Ascending aorta (tissue), 2 donors: ENCODE measurements at regions of chr6 and their contacts with region 1.

Region 1: GRCh38 chr6:53171605-53172446 is 23.2 kb upstream of the GCM1 start:
- DNase-seq: peak; percentile 52 to 93
- H3K4me3 ChIP-seq: no peak overlapping the region
- H3K27ac ChIP-seq: no peak overlapping the region
- H3K4me1 ChIP-seq: no peaks in the 10 kb centered on the region
- H3K27me3 ChIP-seq: no peaks in the 10 kb centered on the region
- CTCF ChIP-seq: peak; percentile 100

Region 2: DNA sequence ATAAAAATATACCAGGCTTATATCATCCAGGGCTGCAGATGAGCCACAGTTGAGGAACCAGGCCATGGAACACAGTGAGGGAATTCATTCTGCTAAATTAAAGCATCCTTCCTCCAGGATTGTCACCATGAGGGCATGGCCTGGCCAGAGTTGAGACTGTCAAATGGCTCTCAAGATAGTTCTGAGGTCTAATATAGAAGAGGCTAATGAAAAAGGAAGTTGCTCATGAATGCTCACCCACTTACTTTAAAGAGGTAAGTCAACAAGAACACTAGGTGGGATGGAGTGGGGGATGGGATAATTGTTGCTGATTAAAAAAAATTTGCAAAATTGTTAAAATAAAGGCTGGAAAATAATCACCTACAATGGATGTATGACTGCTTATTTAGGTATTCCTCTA is 48.8 kb after region 1 on chr6:
- intact Hi-C with region 1: no loop called
- DNase-seq: no peak
- H3K4me3 ChIP-seq: no peak overlapping the region
- H3K27ac ChIP-seq: no peak overlapping the region
- H3K4me1 ChIP-seq: no peaks in the 10 kb centered on the region
- H3K27me3 ChIP-seq: no peaks in the 10 kb centered on the region
- CTCF ChIP-seq: no peak

Region 3: DNA sequence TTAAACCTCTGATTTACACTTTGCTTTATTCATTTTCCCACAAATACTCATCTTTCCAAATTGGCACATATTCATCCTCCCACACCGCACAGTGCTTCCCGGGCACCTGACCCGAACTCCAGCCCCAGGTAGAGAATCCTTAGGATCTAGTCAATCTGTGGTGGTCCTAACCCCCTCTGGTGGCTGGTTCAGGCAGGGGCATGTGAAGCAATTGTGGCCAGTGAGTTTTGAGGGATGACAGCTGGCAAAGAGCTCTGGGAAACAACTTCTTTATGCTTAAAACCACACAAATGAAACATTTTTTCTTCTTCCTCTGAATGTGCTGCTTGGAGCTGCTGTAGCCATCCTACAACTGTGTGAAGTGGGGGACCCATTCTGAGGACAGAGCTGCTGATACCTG is 122.3 kb after region 1 on chr6:
- intact Hi-C with region 1: loop called (anchors 5 kb)
- DNase-seq: no peak
- H3K4me3 ChIP-seq: no peak overlapping the region
- H3K27ac ChIP-seq: no peak overlapping the region
- H3K4me1 ChIP-seq: no peaks in the 10 kb centered on the region
- H3K27me3 ChIP-seq: no peaks in the 10 kb centered on the region
- CTCF ChIP-seq: peak in 2 of 3 experiments; percentile 30 to 44

Region 4: DNA sequence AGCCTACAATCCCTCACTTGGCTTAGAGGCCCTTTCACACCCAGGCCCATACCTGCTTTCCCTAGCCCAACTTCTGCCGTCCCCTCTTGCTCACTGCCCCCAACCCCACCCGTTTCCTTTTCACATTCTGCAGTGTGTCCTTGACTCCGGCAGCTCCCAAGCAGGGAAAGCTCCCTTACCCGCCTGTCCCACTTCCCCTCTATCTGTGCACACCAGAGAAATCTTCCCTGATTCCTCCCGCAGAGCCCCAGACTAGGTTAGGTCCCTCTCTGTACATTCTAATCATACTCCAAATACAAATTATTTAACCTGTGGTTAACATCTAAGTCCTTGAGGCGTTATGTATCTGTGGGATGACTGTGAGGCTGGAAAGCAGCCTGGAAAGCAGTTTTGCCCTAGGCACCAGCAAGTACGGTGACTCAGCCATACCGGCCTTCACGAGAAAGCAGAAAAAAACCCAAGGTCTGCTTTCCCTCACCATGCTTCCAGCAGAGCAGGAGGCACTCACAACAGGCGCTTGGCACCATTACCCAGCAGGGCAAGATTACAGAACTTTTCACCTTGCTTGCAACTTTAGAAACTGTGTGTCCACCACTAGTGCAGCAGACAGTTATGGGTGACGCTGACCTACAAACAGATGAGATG is 154.7 kb after region 1 on chr6:
- intact Hi-C with region 1: loop called (anchors 10 kb)
- DNase-seq: peak; percentile 20 to 73
- H3K4me3 ChIP-seq: no peak overlapping the region
- H3K27ac ChIP-seq: peak overlapping the region; percentile 33 to 71
- H3K4me1 ChIP-seq: peaks cover 6 to 36% of the 10 kb centered on the region in 2 donors
- H3K27me3 ChIP-seq: no peaks in the 10 kb centered on the region
- CTCF ChIP-seq: no peak

Region 5: DNA sequence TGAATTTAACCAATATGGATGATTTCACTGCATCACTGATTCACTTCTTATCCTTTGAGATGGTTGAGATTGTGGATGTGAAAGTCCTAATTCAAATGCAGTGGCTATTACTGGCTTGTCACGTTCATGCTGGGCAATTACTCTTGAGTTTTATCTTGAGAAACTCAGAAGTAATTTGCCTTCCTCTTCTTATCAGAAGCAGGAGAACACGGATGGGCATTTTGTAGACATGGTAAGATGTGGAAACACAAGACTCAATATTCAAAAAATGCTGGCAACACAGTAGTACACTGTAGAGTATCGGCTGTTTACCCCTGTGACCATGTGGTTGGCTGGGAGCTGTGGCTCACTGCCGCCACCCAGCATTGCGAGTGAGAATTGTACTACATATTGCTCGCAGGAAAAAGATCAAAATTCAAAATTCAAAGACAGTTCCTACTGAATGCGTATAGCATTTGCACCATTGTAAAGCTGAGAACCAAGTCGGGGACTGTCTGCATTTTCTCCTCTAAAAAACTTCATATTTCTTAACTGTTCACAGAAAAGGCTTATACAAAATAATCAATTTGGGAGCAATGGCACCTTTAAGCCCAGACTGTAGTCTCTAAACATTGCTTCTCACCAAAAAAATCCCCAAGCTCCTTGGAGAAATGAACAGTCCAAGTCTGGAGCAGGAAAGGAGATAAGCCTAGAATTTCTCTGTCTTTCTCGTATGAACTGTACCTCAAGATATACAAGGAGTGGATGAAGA is 238.9 kb after region 1 on chr6:
- intact Hi-C with region 1: loop called (anchors 2 kb)
- DNase-seq: no peak
- H3K4me3 ChIP-seq: no peak overlapping the region
- H3K27ac ChIP-seq: no peak overlapping the region
- H3K4me1 ChIP-seq: no peaks in the 10 kb centered on the region
- H3K27me3 ChIP-seq: no peaks in the 10 kb centered on the region
- CTCF ChIP-seq: peak; percentile 36 to 77 (median 61)

Region 6: GRCh38 chr6:53484476-53485280 is 312.9 kb after region 1 on chr6:
- intact Hi-C with region 1: loop called (anchors 1 kb)
- DNase-seq: peak in 1 of 2 donors; percentile 86
- H3K4me3 ChIP-seq: no peak overlapping the region
- H3K27ac ChIP-seq: no peak overlapping the region
- H3K4me1 ChIP-seq: peaks cover 0 to 3% of the 10 kb centered on the region in 2 donors
- H3K27me3 ChIP-seq: no peaks in the 10 kb centered on the region
- CTCF ChIP-seq: peak; percentile 79 to 98 (median 90)

Region 7: DNA sequence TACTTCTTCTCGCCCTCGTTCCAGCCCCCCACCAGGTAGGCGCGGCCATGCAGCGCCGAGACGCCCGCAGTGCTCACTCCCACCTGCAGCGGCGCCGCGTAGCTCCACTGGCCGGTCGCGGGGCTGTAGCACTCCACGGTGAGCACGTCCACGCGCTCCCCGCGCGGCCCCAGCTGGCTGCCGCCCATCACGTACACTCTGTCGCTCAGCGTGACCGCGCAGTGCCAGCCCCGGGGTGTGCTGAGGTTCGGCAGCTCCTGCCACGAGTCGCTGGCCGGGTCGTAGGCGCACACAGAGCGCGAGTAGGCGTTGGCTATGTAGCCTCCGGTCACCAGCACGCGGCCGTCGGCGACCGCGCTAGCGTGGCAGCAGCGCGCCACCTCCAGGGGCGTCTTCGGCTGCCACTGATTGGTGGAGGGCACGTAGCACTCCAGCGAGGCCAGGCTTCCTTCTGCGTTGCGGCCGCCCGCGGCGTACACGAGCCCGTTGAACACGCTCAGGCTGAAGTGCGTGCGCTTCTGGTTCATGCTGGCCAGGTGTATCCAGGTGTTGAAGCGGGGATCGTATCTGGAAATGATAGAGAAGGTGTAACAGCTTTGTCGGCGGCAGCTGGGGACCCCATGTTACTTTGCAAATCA is 480.1 kb after region 1 on chr6:
- intact Hi-C with region 1: loop called (anchors 5 kb)
- DNase-seq: peak; percentile 24 to 80
- H3K4me3 ChIP-seq: peak overlapping the region; percentile 71
- H3K27ac ChIP-seq: no peak overlapping the region
- H3K4me1 ChIP-seq: peaks cover 0 to 5% of the 10 kb centered on the region in 2 donors
- H3K27me3 ChIP-seq: no peaks in the 10 kb centered on the region
- CTCF ChIP-seq: peak; percentile 9 to 31 (median 26)

Region 8: GRCh38 chr6:53725791-53726431 is 554.1 kb after region 1 on chr6:
- intact Hi-C with region 1: loop called (anchors 5 kb)
- DNase-seq: peak in 1 of 2 donors; percentile 84
- H3K4me3 ChIP-seq: no peak overlapping the region
- H3K27ac ChIP-seq: no peak overlapping the region
- H3K4me1 ChIP-seq: no peaks in the 10 kb centered on the region
- H3K27me3 ChIP-seq: no peaks in the 10 kb centered on the region
- CTCF ChIP-seq: peak; percentile 76 to 97 (median 95)